Panc1 (cell line): ENCODE measurements at regions of chr10 and their contacts with region 1.

Region 1: DNA sequence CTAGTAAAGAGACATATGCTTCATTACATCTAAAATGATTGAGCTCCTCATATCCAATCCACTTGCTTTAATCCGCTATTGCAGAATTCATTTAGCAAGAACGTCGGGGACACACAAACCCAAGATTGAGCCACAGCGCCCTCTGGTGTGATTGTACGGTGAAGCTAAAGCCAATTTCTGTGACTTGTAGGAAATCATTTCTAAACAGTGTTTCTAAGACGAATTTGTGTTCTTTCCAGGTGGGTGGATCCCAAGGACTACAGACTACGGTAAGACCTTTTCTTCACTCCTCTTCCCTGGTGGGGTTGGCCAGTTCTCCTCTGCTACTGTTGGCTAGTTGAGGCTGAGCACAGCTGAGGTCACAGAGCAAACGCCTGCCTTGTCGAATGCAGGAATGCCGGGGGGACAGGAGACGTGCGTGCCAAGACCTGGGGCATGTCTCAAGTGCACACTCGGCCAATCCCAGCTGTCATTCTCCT is 5.2 kb downstream of the DMBT1 start:
- DNase-seq: peak; percentile 79
- ATAC-seq: peak; percentile 65; the same call in 1 of the 2 replicates
- H3K4me3 ChIP-seq: peak overlapping the region in 1 of 2 experiments; percentile 49; a peak in 2 of 4 replicates
- H3K27ac ChIP-seq: no peak overlapping the region
- H3K4me1 ChIP-seq: no peaks in the 10 kb centered on the region
- H3K27me3 ChIP-seq: peaks cover 4% of the 10 kb centered on the region; the same call in 1 of the 2 replicates
- CTCF ChIP-seq: peak; percentile 91

Region 2: GRCh38 chr10:122279725-122280141 is 286.0 kb before region 1 on chr10:
- CTCF ChIA-PET with region 1: interaction called, 11 read pairs
- POLR2A ChIA-PET with region 1: no interaction called
- in situ Hi-C with region 1: no loop called
- intact Hi-C with region 1: loop called (anchors 5 kb)
- DNase-seq: no peak
- ATAC-seq: peak; percentile 80
- H3K4me3 ChIP-seq: no peak overlapping the region
- H3K27ac ChIP-seq: no peak overlapping the region
- H3K4me1 ChIP-seq: peaks cover 8% of the 10 kb centered on the region
- H3K27me3 ChIP-seq: no peaks in the 10 kb centered on the region
- CTCF ChIP-seq: peak; percentile 90

Region 3: DNA sequence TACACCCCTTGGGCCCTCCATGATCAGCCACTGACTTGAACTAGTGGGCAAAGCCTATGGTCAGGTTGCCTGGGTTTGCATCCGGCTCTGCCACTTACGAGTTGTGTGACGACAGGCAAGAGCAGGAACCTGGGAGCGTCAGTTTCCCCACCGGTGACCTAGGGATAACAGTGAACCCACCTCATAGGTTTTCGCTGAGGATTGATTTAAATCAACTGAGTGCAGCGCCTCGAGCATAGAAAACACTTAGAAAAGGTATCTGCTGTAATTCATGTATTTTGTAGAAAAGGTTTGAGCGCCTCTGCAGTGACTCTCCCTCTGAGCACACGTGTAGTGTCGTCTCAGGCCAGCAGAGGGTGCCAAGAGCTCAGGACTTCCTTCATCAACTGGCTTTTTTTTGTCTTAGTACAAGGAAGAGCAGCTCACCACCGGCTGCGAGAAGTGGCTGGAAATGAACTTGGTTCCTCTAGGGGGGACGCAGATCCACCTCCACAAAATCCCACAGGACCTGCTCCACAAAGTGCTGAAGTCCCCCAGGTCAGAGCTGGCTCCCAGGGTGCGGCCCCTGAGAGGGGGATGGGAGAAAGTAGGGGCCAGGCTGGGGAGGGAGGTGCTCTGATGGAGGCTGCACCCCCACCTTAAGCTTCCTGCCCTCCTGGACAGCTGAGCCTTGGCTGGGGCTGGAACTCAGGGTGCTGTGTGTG is 267.0 kb before region 1 on chr10:
- CTCF ChIA-PET with region 1: interaction called, 14 read pairs
- POLR2A ChIA-PET with region 1: no interaction called
- in situ Hi-C with region 1: no loop called
- intact Hi-C with region 1: loop called (anchors 5 kb)
- DNase-seq: peak; percentile 80
- ATAC-seq: peak; percentile 90
- H3K4me3 ChIP-seq: peak overlapping the region; percentile 18 to 24
- H3K27ac ChIP-seq: peak overlapping the region; percentile 76
- H3K4me1 ChIP-seq: peaks cover 17% of the 10 kb centered on the region
- H3K27me3 ChIP-seq: no peaks in the 10 kb centered on the region
- CTCF ChIP-seq: peak; percentile 96

Region 4: GRCh38 chr10:122459561-122460273 is 106.0 kb before region 1 on chr10:
- CTCF ChIA-PET with region 1: no interaction called
- POLR2A ChIA-PET with region 1: no interaction called
- in situ Hi-C with region 1: no loop called
- intact Hi-C with region 1: loop called (anchors 10 kb)
- DNase-seq: no peak
- ATAC-seq: no peak
- H3K4me3 ChIP-seq: no peak overlapping the region
- H3K27ac ChIP-seq: no peak overlapping the region
- H3K4me1 ChIP-seq: peaks cover 10% of the 10 kb centered on the region
- H3K27me3 ChIP-seq: no peaks in the 10 kb centered on the region
- CTCF ChIP-seq: no peak

Region 5: DNA sequence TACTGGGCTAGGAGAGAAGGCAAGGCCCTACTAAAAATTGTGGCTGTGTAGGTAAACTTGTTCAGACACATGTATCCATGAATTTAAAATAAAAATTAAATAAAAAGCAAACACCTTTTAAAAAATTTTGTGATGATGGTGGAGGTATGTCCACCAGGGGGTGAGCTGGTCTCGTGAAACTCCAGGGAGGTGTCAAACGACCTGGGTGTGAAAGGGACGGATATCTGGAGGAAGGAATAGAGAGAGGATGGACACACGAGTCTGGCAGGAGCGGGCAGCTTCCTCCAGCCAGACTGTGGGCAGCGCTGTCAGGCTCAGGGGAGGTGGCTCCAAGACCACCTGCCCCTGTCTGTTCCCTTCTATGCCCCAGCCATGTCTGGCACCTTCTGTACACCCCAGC is 40.0 kb before region 1 on chr10:
- CTCF ChIA-PET with region 1: no interaction called
- POLR2A ChIA-PET with region 1: no interaction called
- in situ Hi-C with region 1: no loop called
- intact Hi-C with region 1: loop called (anchors 1 kb)
- DNase-seq: no peak
- ATAC-seq: peak; percentile 64; the same call in 1 of the 2 replicates
- H3K4me3 ChIP-seq: no peak overlapping the region
- H3K27ac ChIP-seq: no peak overlapping the region
- H3K4me1 ChIP-seq: no peaks in the 10 kb centered on the region
- H3K27me3 ChIP-seq: peaks cover 12% of the 10 kb centered on the region
- CTCF ChIP-seq: peak; percentile 26

Region 6: GRCh38 chr10:122537545-122537944 is 28.2 kb before region 1 on chr10:
- CTCF ChIA-PET with region 1: no interaction called
- POLR2A ChIA-PET with region 1: no interaction called
- in situ Hi-C with region 1: no loop called
- intact Hi-C with region 1: no loop called
- DNase-seq: no peak
- ATAC-seq: no peak
- H3K4me3 ChIP-seq: no peak overlapping the region
- H3K27ac ChIP-seq: no peak overlapping the region
- H3K4me1 ChIP-seq: no peaks in the 10 kb centered on the region
- H3K27me3 ChIP-seq: peaks cover 17% of the 10 kb centered on the region
- CTCF ChIP-seq: no peak

Region 7: GRCh38 chr10:122688293-122688994 is 122.7 kb after region 1 on chr10:
- CTCF ChIA-PET with region 1: no interaction called
- POLR2A ChIA-PET with region 1: no interaction called
- in situ Hi-C with region 1: no loop called
- intact Hi-C with region 1: no loop called
- DNase-seq: no peak
- ATAC-seq: no peak
- H3K4me3 ChIP-seq: no peak overlapping the region
- H3K27ac ChIP-seq: no peak overlapping the region
- H3K4me1 ChIP-seq: no peaks in the 10 kb centered on the region
- H3K27me3 ChIP-seq: peaks cover 26% of the 10 kb centered on the region
- CTCF ChIP-seq: peak; percentile 50

Region 8: GRCh38 chr10:122703439-122704118 is 137.8 kb after region 1 on chr10:
- CTCF ChIA-PET with region 1: no interaction called
- POLR2A ChIA-PET with region 1: no interaction called
- in situ Hi-C with region 1: no loop called
- intact Hi-C with region 1: loop called (anchors 1 kb)
- DNase-seq: peak; percentile 41
- ATAC-seq: peak; percentile 99
- H3K4me3 ChIP-seq: no peak overlapping the region
- H3K27ac ChIP-seq: no peak overlapping the region
- H3K4me1 ChIP-seq: no peaks in the 10 kb centered on the region
- H3K27me3 ChIP-seq: peaks cover 9% of the 10 kb centered on the region; the same call in 1 of the 2 replicates
- CTCF ChIP-seq: peak; percentile 98